ENCODE measurements at regions of chr20 and their contacts with region 1.

Region 1: DNA sequence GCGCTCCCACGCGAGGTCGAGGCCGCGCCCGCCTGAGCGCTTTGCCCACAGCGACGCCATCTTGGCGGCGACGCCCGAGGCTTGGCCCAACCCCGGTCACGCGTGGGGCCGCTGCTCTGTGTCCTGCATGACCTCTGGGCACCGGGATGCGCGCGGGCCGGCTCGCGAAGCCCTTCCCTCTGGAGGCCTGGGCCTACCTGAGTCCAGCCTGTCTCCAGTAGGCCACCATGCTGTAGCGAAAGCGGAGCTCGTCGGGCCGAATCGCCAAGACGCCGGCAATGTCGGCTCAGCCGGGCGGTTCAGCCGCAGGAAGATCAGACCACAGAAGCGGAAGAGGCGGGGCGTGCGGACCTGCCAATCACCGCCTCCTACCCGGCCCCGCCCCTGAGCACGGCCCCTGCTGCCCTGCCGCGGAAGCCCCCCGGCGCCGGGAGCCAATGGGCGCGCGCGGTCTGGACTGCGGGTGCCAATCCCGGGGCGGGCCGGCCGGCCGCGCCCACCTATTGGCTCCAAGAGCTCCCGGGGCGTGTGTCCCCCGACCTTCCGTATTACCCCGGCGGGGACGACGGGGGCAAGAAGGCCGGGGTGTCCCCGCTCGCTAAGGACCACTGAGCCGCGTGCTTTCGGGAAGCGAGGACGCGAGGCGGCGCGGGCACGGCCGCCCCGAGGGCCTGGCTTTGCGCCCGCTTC is at the start of gene ATP5F1E:
- DNase-seq: peak; percentile 96
- H3K4me3 ChIP-seq: peak within 1 kb of the TSS; percentile 63 to 76 (median 76)
- H3K27ac ChIP-seq: peak within 1 kb of the TSS; percentile 82
- H3K4me1 ChIP-seq: peaks cover 43% of the 10 kb centered on the region
- H3K27me3 ChIP-seq: no peaks in the 10 kb centered on the region
- CTCF ChIP-seq: no peak
- POLR2A ChIP-seq: peak; percentile 94
- total RNA-seq, gene ATP5F1E: 107 and 114 TPM in 2 replicates

Region 2: GRCh38 chr20:58890518-58891085 is 141.6 kb before region 1 on chr20:
- CTCF ChIA-PET with region 1: no interaction called
- POLR2A ChIA-PET with region 1: interaction called, 4 read pairs
- dilution Hi-C with region 1: no loop called
- intact Hi-C with region 1: loop called (anchors 1 kb)
- DNase-seq: peak; percentile 87
- H3K4me3 ChIP-seq: peak overlapping the region; percentile 17 to 91 (median 70)
- H3K27ac ChIP-seq: peak overlapping the region; percentile 47
- H3K4me1 ChIP-seq: peaks cover 30% of the 10 kb centered on the region
- H3K27me3 ChIP-seq: peaks cover 2% of the 10 kb centered on the region in 2 experiments
- CTCF ChIP-seq: no peak
- POLR2A ChIP-seq: peak; percentile 25

Region 3: DNA sequence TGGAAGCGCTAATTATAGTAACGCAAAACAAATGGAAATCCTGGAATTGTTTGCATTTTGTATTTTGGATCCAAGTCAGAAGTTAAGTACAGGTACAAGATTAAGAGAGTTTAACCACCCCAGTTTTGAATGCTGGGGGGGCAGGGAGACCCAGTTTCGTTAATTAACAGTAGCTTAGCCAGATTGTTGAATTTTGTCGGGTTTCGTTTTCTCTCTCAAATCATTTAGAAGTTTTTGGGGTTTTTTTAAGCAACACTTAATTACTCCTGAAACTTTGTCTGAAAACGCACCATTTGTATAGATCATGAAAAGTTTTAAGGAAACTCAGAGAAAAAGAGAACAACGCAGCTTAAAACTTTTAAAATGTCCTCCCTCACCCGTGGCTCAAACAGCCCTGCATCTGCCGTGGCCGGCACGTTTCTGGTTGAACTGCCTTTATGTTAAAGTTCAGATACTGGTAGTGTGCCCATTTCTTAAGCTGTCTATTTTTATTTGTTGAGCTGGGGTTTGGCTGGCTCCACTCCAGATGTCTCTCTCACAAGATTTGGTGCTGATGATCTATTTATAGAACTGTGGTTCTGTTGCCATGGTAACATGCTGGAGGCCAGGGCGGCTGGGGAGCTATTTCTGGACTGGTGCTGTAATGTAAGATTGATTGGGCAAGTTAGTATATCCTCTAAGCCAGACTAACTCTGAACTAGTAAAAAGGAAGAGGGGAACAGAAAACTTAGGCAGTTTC is 124.6 kb before region 1 on chr20:
- CTCF ChIA-PET with region 1: no interaction called
- POLR2A ChIA-PET with region 1: interaction called, 4 read pairs
- dilution Hi-C with region 1: no loop called
- intact Hi-C with region 1: loop called (anchors 1 kb)
- DNase-seq: peak; percentile 97
- H3K4me3 ChIP-seq: peak overlapping the region in 1 of 3 experiments; percentile 39
- H3K27ac ChIP-seq: peak overlapping the region; percentile 97
- H3K4me1 ChIP-seq: peaks cover 34% of the 10 kb centered on the region
- H3K27me3 ChIP-seq: no peaks in the 10 kb centered on the region
- CTCF ChIP-seq: no peak
- POLR2A ChIP-seq: no peak

Region 4: DNA sequence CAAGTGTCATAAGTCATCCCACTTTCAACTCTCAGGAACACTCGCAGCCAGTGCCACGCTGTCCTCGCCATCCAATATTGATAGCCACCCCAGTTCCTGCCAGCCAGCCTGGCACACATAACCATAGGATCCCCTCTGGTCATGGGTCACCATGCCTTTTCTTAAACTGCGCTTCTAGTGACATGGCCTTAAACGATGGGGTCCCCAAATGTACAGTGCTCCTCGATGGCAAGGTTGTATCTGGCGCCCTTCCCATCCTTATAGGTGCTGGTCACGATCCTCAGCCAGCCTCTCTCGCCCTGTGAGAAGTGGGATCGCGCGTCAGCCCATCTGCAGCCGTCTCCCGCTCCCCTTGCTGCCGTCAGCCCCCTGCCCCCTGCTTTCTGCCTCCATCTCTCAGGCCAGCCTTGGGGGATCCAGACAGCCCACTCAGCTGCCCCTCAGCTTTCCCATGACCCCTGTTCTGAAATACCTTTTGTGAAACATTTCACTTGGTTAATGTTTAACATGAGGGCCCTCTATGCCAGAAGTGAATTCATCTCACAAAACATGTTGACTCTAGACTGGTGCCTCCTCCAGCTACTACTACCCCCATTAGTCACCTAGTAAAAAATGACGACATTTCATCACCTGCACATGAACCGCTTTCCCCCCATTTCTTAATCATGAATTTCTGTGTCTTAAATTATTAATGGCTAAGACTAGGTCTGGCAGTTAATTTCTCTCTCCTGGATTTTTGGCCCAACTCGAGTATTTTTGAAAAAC is 36.5 kb before region 1 on chr20:
- CTCF ChIA-PET with region 1: interaction called, 6 read pairs
- POLR2A ChIA-PET with region 1: no interaction called
- dilution Hi-C with region 1: no loop called
- intact Hi-C with region 1: loop called (anchors 5 kb)
- DNase-seq: no peak
- H3K4me3 ChIP-seq: no peak overlapping the region
- H3K27ac ChIP-seq: no peak overlapping the region
- H3K4me1 ChIP-seq: no peaks in the 10 kb centered on the region
- H3K27me3 ChIP-seq: no peaks in the 10 kb centered on the region
- CTCF ChIP-seq: no peak
- POLR2A ChIP-seq: no peak

Region 5: GRCh38 chr20:59006864-59007664 is 25.1 kb before region 1 on chr20 and contains the start of gene CTSZ:
- CTCF ChIA-PET with region 1: interaction called, 7 read pairs
- POLR2A ChIA-PET with region 1: interaction called, 13 read pairs
- dilution Hi-C with region 1: no loop called
- intact Hi-C with region 1: loop called (anchors 1 kb)
- DNase-seq: peak; percentile 34
- H3K4me3 ChIP-seq: peak within 1 kb of the TSS; percentile 64 to 74 (median 68)
- H3K27ac ChIP-seq: peak within 1 kb of the TSS; percentile 89
- H3K4me1 ChIP-seq: peaks cover 41% of the 10 kb centered on the region
- H3K27me3 ChIP-seq: no peaks in the 10 kb centered on the region
- CTCF ChIP-seq: no peak
- POLR2A ChIP-seq: peak; percentile 81
- total RNA-seq, gene CTSZ: 299 and 304 TPM in 2 replicates

Region 6: DNA sequence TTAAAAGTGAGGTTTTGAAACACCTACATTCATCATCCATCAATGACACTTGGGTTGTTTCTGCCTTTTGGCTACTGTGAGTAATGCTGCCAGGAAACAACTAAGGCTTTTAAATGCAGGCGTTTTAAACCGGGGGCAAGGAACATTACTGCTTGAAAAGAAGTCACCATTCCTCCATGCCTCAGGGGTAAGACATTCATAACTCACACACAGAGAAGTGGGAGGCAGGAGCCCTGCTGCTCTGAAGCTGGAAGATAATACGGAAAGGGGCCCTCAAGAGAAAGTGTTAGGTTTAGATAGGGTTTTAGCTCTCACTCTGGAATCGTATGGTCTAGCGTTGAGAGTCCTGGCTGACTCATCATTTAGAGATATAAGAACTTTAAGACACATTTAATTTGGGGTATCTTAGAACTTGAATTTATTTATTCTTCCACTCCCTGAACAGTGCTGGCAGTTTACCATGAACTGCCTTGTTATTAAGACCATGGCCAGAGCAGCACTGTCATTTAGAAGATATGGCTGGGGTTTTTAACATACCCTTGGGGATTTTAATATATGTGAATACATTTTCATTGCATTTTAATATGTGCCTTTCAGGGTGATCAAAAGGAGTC is 11.1 kb before region 1 on chr20:
- CTCF ChIA-PET with region 1: interaction called, 14 read pairs
- POLR2A ChIA-PET with region 1: no interaction called
- dilution Hi-C with region 1: no loop called
- intact Hi-C with region 1: loop called (anchors 1 kb)
- DNase-seq: no peak
- H3K4me3 ChIP-seq: no peak overlapping the region
- H3K27ac ChIP-seq: no peak overlapping the region
- H3K4me1 ChIP-seq: peaks cover 7% of the 10 kb centered on the region
- H3K27me3 ChIP-seq: no peaks in the 10 kb centered on the region
- CTCF ChIP-seq: no peak
- POLR2A ChIP-seq: no peak

Region 7: GRCh38 chr20:59042796-59043660 is 10.9 kb after region 1 on chr20:
- CTCF ChIA-PET with region 1: interaction called, 5 read pairs
- POLR2A ChIA-PET with region 1: interaction called, 5 read pairs
- dilution Hi-C with region 1: no loop called
- intact Hi-C with region 1: loop called (anchors 1 kb)
- DNase-seq: peak; percentile 90
- H3K4me3 ChIP-seq: peak overlapping the region; percentile 26 to 91 (median 69)
- H3K27ac ChIP-seq: no peak overlapping the region
- H3K4me1 ChIP-seq: peaks cover 8% of the 10 kb centered on the region
- H3K27me3 ChIP-seq: peaks cover 0 to under 1% of the 10 kb centered on the region in 2 experiments
- CTCF ChIP-seq: no peak
- POLR2A ChIP-seq: no peak

Region 8: DNA sequence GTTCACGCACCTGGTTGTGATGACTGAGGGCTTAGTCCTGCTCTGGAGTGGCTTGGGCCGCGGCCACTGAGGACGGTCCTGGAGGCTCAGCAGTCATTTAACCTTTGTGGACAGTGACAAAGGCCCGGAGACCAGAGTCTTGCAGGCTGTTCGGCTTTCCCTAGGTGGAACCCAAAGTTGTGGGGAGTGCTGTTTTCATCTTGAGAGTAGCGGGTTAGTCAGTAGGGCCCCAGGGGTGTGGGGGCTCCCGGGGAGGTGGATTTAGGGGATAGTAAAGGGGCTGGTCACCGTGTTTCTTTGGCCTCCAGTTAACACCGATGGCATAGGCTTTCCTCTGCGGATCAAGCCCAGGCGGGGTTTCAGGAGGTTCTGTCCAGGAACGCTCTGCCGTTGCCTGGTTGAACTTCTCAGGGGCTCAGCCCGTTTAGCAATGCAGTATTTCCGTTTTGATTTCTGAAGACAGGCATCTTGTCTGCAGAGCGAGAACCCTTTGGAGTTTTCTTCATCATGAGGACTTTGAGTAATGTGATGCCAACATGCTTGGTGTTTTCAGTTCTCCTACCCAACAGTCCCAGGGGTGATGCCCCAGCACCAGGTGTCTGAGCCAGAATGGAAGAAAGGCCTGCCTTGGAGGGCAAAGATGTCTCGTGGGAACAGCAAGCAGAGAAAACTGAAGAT is 163.3 kb after region 1 on chr20:
- CTCF ChIA-PET with region 1: no interaction called
- POLR2A ChIA-PET with region 1: no interaction called
- dilution Hi-C with region 1: no loop called
- intact Hi-C with region 1: no loop called
- DNase-seq: no peak
- H3K4me3 ChIP-seq: no peak overlapping the region
- H3K27ac ChIP-seq: no peak overlapping the region
- H3K4me1 ChIP-seq: no peaks in the 10 kb centered on the region
- H3K27me3 ChIP-seq: no peaks in the 10 kb centered on the region
- CTCF ChIP-seq: no peak
- POLR2A ChIP-seq: no peak

Measured in endothelial cell of umbilical vein (primary cell).